ENCODE measurements at regions of chr1 and their contacts with region 1.

Region 1: DNA sequence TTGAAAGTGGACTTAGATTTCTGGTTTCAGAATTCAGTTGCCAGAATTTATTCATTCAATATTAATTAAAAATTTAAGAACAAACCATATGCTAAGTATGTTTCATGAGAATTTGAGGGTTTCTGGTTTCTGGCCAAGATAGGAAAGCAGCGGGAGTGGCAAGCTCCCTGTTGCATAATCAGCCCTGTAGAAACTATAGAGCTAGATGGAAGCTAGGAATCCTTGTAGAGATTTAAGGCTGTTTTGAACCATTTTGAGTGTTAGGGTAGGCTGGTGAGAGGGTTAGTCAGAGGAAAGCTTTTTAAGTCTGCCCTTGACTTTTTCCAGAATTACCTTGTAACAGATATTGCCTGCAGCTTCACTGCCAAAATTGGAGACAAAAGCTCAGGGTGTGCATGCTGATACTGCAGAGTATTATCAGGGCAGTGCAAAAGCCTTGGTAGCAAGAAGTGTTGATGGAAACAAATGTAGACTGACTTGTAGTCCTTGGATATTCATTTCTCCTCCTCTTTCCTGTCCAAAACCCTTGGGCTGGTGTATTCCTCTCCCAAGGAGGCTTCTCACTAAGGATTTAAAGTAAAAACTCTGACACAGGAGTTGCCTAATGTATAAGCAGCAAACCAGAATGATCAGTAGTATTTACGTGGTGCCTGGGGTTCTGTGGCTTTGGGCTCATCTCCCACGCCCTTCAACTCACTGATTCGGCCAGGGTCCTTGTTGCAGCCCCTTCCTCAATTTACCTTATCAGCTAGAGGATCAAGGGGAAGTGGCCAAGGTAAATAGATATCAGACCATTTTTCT is 12.6 kb upstream of the GIPC2 start:
- DNase-seq: no peak
- H3K4me3 ChIP-seq: no peak overlapping the region
- H3K27ac ChIP-seq: no peak overlapping the region
- H3K4me1 ChIP-seq: no peaks in the 10 kb centered on the region
- H3K27me3 ChIP-seq: no peaks in the 10 kb centered on the region
- CTCF ChIP-seq: no peak
- EP300 ChIP-seq: no peak
- POLR2A ChIP-seq: no peak
- RAD21 ChIP-seq: no peak

Region 2: GRCh38 chr1:77925518-77925917 is 107.7 kb before region 1 on chr1:
- CTCF ChIA-PET with region 1: no interaction called
- POLR2A ChIA-PET with region 1: no interaction called
- DNase-seq: no peak
- H3K4me3 ChIP-seq: no peak overlapping the region
- H3K27ac ChIP-seq: no peak overlapping the region
- H3K4me1 ChIP-seq: no peaks in the 10 kb centered on the region
- H3K27me3 ChIP-seq: no peaks in the 10 kb centered on the region
- CTCF ChIP-seq: no peak
- EP300 ChIP-seq: no peak
- POLR2A ChIP-seq: no peak
- RAD21 ChIP-seq: no peak

Region 3: DNA sequence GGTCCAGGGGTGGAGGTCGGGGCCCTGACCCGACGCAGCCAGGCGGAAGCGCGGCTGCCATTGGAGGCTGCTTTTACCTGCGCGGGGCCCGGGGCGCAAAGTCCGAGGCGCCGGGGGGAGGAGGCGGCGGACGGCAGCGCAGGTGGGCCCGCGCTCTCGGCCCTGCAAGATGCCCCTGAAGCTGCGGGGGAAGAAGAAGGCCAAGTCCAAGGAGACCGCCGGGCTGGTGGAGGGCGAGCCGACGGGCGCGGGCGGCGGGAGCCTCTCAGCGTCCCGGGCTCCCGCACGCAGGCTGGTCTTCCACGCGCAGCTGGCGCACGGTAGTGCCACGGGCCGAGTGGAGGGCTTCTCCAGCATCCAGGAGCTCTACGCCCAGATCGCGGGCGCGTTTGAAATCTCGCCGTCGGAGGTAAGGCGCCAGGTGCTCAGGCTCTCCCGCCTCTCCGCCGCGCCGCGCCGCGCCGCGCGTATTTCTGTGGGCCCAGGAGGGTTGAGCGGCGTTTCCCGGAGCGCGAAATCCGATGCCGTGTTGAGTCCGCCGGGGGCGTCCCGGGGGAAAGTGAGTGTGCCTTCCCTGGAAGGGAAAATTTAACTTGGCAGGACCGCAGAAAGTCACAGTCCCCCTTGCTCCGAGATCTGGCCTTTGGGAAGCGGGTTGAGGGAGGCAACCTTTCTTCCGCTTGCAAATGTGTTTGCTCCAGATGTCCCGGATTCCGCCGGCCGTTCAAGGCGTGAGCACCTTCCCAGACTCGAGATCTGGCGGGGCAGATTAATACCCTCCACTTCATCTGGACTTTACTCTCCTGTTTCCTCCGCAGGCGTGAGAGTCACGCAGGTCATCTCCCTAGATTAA is 13.0 kb after region 1 on chr1 and contains the start of gene GIPC2:
- CTCF ChIA-PET with region 1: interaction called, 12 read pairs
- POLR2A ChIA-PET with region 1: interaction called, 14 read pairs
- DNase-seq: peak in 1 of 2 experiments; percentile 76
- H3K4me3 ChIP-seq: peak within 1 kb of the TSS; percentile 62 to 73 (median 70)
- H3K27ac ChIP-seq: no peak within 1 kb of the TSS
- H3K4me1 ChIP-seq: peaks cover 0 to 9% (median 6%) of the 10 kb centered on the region in 4 experiments; a peak in 3 of 7 replicates
- H3K27me3 ChIP-seq: peaks cover 4 to 28% (median 24%) of the 10 kb centered on the region in 4 experiments
- CTCF ChIP-seq: no peak
- EP300 ChIP-seq: no peak
- POLR2A ChIP-seq: peak in 1 of 2 experiments; percentile 63; a peak in 2 of 3 replicates
- RAD21 ChIP-seq: no peak
- total RNA-seq, gene GIPC2: 0.69 and 1.9 TPM in 2 replicates

Region 4: DNA sequence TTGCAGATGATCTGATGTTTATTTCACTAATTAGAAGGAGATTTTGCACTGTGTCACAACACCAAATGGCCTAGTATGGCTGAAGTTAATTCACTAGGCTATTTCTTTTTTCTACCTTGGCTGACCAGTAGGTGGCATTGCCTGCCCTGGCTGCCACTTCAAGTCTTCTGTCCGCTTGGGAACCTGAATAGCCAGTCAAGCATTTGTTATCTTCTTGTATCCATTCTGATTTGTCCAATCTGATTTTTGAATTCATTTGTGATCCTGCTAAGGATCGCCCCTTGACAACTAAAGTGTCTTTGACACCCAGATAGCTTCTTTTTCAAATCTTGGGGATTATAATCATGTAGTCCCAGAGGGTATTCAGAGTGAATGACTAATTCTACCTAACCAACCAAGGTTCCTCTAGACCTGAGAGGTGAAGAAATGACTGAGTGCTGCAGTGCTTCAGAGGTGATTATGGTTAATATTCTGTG is 111.9 kb after region 1 on chr1:
- CTCF ChIA-PET with region 1: no interaction called
- POLR2A ChIA-PET with region 1: no interaction called
- DNase-seq: no peak
- H3K4me3 ChIP-seq: no peak overlapping the region
- H3K27ac ChIP-seq: no peak overlapping the region
- H3K4me1 ChIP-seq: no peaks in the 10 kb centered on the region
- H3K27me3 ChIP-seq: no peaks in the 10 kb centered on the region
- CTCF ChIP-seq: peak; percentile 70 to 85 (median 80)
- EP300 ChIP-seq: no peak
- POLR2A ChIP-seq: no peak
- RAD21 ChIP-seq: peak; percentile 97 to 98

Measured in H1 (cell line).